Panc1 (cell line): ENCODE measurements at regions of chr2 and their contacts with region 1.

Region 1: GRCh38 chr2:25606892-25607291 is 66.5 kb downstream of the DTNB start:
- DNase-seq: peak; percentile 35
- ATAC-seq: no peak
- H3K4me3 ChIP-seq: no peak overlapping the region
- H3K27ac ChIP-seq: no peak overlapping the region
- H3K4me1 ChIP-seq: no peaks in the 10 kb centered on the region
- H3K27me3 ChIP-seq: no peaks in the 10 kb centered on the region
- CTCF ChIP-seq: peak; percentile 74; the same call in 1 of the 2 replicates

Region 2: DNA sequence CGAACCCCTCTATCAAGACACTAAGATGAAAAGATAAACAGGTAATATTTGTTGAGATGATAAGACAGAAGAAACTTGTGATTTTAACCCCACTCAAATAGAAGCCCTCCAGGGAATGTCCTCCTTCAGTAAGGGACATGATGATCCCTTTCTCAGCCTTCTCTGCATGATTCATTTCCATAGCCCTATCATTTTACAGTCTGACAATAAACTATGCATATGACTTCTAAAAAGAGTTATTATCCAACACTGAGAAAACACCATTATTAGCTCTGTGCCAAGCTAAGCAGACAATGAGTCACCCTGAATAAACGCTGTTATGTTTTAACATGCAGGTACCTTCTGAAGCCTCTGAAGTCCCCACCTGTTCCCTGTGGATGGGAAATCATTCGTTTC is 11.7 kb after region 1 on chr2:
- CTCF ChIA-PET with region 1: no interaction called
- POLR2A ChIA-PET with region 1: interaction called, 18 read pairs
- in situ Hi-C with region 1: no loop called
- intact Hi-C with region 1: no loop called
- DNase-seq: peak; percentile 75
- ATAC-seq: peak; percentile 86
- H3K4me3 ChIP-seq: peak overlapping the region in 1 of 2 experiments; percentile 27; a peak in 2 of 4 replicates
- H3K27ac ChIP-seq: peak overlapping the region; percentile 52
- H3K4me1 ChIP-seq: peaks cover 37% of the 10 kb centered on the region
- H3K27me3 ChIP-seq: no peaks in the 10 kb centered on the region
- CTCF ChIP-seq: no peak

Region 3: DNA sequence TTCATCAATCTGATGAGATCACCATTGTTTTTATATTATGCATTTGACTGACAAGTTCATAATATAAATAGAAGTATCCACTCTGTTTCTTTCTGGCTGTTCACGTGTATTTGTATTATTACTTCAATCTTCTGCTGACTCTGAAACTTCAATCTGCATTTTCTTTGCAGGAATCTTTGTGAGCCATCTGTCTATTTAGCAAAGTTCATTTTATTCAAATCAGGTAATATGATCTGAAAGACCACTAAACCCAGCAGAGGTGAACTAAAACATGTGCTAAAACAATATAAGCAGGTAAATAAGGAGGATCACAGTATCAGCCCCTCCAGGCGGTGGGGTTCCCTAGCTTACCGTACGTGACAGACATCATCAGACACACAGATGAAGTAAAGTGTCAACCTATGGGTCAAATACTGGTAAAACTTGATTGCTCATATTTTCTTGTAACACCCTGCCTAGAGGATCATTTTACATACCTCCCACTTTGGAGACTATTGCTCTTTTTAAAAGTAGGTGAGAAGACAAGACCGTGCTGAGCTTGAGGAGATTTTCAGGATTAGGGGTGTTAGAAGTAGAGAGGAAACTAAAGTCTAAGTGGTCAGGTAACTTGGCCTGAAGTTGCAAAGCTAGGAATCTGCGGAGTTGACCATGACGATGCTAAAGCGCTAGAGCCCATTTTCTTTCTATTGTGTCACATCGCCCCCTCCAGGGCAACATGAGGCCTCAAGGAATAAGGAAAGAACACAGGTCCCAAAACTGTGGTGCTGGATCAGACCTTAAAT is 57.5 kb after region 1 on chr2:
- CTCF ChIA-PET with region 1: interaction called, 40 read pairs
- POLR2A ChIA-PET with region 1: no interaction called
- in situ Hi-C with region 1: no loop called
- intact Hi-C with region 1: loop called (anchors 1 kb)
- DNase-seq: peak; percentile 67
- ATAC-seq: peak; percentile 97
- H3K4me3 ChIP-seq: no peak overlapping the region
- H3K27ac ChIP-seq: peak overlapping the region; percentile 49
- H3K4me1 ChIP-seq: peaks cover 14% of the 10 kb centered on the region; the same call in 1 of the 2 replicates
- H3K27me3 ChIP-seq: no peaks in the 10 kb centered on the region
- CTCF ChIP-seq: peak; percentile 88